Endothelial cell of umbilical vein (primary cell): ENCODE measurements at regions of chr13 and their contacts with region 1.

Region 1: GRCh38 chr13:107117327-107118012 is 549.5 kb upstream of the ARGLU1 start:
- DNase-seq: no peak
- H3K4me3 ChIP-seq: no peak overlapping the region
- H3K27ac ChIP-seq: no peak overlapping the region
- H3K4me1 ChIP-seq: no peaks in the 10 kb centered on the region
- H3K27me3 ChIP-seq: peaks cover 0 to 3% of the 10 kb centered on the region in 2 experiments
- CTCF ChIP-seq: no peak
- POLR2A ChIP-seq: no peak

Region 2: DNA sequence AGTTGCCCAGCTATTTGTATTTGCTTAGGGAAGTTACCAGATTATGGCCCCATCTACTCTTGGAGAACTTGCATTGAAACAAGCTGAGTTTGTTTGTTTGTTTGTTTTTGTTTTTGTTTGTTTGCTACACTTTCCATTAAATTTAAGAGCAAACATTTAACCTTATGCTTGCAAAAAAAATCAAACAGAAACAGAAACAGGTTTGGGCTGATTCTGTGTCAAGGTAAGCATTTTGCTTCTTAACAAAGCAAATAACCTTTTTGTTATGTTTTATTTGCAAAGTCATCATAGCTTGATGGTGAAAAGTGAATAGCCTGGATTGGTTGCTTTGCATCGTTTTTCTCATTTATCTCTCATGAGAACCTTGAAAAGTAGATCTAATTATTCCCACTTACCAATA is 1113.8 kb before region 1 on chr13:
- CTCF ChIA-PET with region 1: no interaction called
- POLR2A ChIA-PET with region 1: no interaction called
- dilution Hi-C with region 1: no loop called
- intact Hi-C with region 1: loop called (anchors 10 kb)
- DNase-seq: no peak
- H3K4me3 ChIP-seq: no peak overlapping the region
- H3K27ac ChIP-seq: no peak overlapping the region
- H3K4me1 ChIP-seq: no peaks in the 10 kb centered on the region
- H3K27me3 ChIP-seq: no peaks in the 10 kb centered on the region
- CTCF ChIP-seq: no peak
- POLR2A ChIP-seq: no peak

Region 3: GRCh38 chr13:107157271-107157670 is 39.8 kb after region 1 on chr13:
- CTCF ChIA-PET with region 1: no interaction called
- POLR2A ChIA-PET with region 1: no interaction called
- dilution Hi-C with region 1: no loop called
- intact Hi-C with region 1: no loop called
- DNase-seq: no peak
- H3K4me3 ChIP-seq: no peak overlapping the region
- H3K27ac ChIP-seq: no peak overlapping the region
- H3K4me1 ChIP-seq: no peaks in the 10 kb centered on the region
- H3K27me3 ChIP-seq: no peaks in the 10 kb centered on the region
- CTCF ChIP-seq: no peak
- POLR2A ChIP-seq: no peak

Region 4: DNA sequence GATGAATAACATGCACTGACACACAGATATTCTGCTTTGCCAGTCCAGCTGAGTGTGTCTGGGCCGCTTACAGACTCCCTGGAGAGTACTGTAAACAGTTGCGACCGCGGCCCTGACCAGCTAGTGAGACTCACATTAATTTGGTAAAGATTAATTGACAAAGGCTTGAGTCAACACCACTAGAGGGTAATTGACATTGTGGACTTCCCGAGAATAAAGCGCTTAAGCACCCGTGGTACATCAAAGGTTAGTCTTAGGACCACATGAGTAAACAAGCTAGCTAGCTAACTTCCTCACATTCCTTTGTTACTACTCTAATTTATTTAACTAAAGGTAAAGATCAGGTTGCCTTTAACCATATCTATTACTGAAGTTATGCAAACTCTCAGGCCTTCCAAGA is 74.8 kb after region 1 on chr13:
- CTCF ChIA-PET with region 1: no interaction called
- POLR2A ChIA-PET with region 1: no interaction called
- dilution Hi-C with region 1: no loop called
- intact Hi-C with region 1: no loop called
- DNase-seq: no peak
- H3K4me3 ChIP-seq: no peak overlapping the region
- H3K27ac ChIP-seq: no peak overlapping the region
- H3K4me1 ChIP-seq: no peaks in the 10 kb centered on the region
- H3K27me3 ChIP-seq: no peaks in the 10 kb centered on the region
- CTCF ChIP-seq: no peak
- POLR2A ChIP-seq: no peak